ENCODE measurements at regions of chr20 and their contacts with region 1.

Region 1: DNA sequence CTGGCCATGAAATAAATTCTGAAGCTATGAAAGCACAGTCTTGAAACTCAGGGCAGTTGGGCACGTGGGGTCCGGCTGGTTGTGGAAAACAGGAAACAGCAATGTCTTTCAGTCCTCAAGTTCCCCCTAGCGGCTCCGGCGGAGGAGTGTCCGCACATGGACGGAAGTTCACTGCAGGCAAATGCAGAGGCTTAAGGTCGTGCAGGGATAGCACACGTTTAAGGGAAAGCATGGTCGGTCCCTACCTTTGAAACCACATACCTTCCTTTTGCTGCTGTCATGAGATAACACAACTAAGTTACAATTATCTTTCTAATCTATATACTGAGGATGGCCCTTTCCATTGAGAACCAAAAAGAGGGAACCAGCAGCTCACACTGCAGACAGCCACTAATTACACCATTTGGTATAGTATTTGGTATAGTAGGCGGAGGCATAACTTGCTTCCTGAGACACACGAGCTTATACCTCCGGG is 52.6 kb upstream of the NFATC2 start:
- DNase-seq: peak; percentile 89 to 90
- ATAC-seq: peak; percentile 98 to 99
- H3K4me3 ChIP-seq: no peak overlapping the region
- H3K27ac ChIP-seq: peak overlapping the region; percentile 43 to 48; a peak in 3 of 6 replicates
- H3K4me1 ChIP-seq: peaks cover 5% of the 10 kb centered on the region
- CTCF ChIP-seq: peak; percentile 89
- EP300 ChIP-seq: no peak
- POLR2A ChIP-seq: no peak
- RAD21 ChIP-seq: peak; percentile 98 to 99

Region 2: DNA sequence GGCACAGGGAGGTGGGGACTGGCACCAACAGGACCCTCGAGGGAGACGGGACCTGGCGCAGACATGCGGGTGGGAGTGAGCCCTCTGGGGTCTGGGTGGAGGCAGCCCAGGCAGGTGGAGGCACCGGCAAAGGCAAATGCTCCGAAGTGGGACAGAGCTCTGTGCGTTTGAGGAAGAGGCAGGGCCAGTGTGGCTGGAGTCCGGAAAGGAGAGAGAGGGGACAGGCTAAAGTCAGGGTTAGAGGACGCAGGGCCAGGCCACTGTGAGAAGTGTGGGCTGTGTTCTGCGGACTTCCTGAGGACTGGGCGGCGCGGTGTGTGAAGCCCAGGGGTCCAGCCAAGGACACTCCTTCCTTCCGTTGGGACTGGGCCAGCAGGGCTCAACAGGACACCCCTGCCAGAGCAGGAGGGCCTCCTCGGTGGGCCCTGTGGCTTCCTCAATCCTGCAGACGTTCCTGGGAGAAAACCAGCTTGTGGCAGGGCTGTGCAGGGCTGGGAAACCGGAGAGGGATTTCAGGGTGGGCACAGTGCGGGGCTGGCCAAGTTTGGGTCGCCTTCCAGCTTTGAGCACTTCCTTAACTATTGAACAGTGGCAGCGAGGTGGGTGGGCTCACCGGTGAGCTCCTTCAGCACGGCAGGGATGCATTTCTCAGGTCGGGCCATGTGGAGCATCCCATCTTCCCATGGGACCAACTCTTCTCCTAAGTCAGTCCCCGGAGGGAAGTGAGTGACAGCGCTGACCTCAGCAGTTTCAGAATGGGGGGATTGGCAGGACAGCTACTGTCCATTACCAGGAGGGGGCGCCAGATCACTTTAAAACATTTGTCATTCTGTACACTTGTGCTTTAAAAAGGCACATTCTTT is 614.0 kb before region 1 on chr20:
- CTCF ChIA-PET with region 1: interaction called, 54 read pairs
- POLR2A ChIA-PET with region 1: no interaction called
- DNase-seq: peak; percentile 60 to 78
- ATAC-seq: peak; percentile 47 to 73; a peak in 5 of 6 replicates
- H3K4me3 ChIP-seq: no peak overlapping the region
- H3K27ac ChIP-seq: peak overlapping the region; percentile 64 to 83
- H3K4me1 ChIP-seq: peaks cover 41% of the 10 kb centered on the region
- CTCF ChIP-seq: peak; percentile 85
- EP300 ChIP-seq: no peak
- POLR2A ChIP-seq: no peak
- RAD21 ChIP-seq: peak; percentile 72 to 77

Region 3: DNA sequence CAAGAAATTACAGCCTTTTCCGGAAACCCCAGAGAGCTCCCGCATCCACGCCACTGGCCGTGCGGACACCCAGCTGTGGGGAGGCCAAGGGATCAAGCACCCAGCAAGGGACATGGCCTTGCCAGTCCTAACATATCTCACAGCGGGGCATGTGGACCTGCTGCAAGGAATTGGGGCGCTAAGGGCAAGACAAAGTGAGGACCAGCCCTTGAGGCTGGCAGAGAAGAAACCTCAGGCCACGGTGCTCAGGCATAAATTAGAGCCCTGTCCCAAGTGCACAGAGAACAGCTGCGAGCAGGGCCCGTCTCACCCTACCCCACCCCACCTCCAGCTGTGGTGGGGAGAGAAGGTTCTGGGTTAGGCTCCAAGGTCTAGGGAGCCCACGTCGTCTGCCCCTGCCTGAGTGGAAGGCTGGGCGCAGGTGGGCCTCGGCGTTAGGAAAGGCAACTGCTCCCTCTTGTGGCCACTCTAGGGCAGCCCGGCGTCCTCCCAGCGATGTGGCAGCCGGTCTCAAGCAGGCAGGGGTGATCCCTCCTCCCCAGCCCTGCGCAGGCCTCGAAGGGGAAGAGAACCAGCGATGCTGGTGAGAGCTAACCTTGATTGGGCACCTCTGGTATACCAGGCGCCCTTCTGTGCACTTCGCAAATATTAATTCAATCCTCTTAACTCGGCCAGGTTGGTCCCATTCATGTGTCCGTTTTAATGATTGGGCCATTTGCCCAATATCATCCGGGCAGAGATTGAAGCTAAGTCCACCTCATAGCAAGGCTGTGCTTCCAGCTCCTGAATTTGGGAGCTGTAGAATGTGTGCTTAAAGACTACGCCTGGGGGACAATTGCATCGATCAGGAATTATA is 288.4 kb before region 1 on chr20:
- CTCF ChIA-PET with region 1: interaction called, 18 read pairs
- POLR2A ChIA-PET with region 1: no interaction called
- DNase-seq: peak; percentile 66 to 78
- ATAC-seq: peak; percentile 98 to 100
- H3K4me3 ChIP-seq: no peak overlapping the region
- H3K27ac ChIP-seq: peak overlapping the region; percentile 26 to 41; a peak in 4 of 6 replicates
- H3K4me1 ChIP-seq: 0 out of 3 replicates have a peak, but pooled peaks cover 3% of the 10 kb centered on the region
- CTCF ChIP-seq: peak; percentile 94
- EP300 ChIP-seq: no peak
- POLR2A ChIP-seq: no peak
- RAD21 ChIP-seq: peak; percentile 95 to 97

Region 4: DNA sequence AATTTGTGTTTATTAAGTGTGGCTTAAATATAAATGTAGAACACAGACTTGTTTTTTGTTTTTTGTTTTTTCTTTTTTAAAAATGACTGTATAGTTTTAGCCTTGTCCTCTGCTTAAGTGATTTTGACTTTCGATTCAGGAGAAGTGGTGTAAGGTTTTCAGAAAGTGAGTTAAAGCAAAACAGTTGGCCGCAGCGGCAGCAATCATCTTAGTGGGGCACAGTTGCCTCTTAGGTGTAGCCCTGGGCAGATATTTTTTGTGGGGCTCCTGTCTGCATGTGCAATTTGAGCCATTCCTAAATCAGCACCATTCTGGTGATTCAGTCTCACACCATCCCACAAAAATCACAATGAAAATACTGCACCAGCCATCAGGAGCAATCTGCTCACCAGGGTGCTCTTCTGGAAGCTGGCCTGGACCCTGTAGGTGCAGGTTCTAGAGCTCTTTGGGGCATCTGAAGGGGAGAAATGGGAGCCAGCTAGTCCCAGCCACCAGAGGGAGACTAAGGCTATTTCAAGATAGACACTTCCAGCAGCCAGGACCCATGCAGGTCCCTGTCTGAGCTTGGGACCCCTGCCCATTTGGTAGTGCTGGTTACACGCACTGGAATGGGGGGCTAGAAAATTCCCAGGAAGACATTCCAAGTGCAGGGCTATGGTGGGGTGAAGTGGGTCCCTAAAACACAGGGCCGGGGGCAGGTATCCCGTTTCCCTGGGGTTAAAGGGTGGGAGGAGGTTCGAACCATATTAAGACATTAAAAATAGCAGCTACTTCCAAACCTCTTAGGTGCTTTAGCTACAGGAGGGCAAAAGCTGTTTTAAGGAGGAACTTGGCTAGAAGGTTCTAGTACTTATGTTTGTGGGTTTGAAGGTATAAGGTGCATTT is 209.2 kb before region 1 on chr20:
- CTCF ChIA-PET with region 1: interaction called, 61 read pairs
- POLR2A ChIA-PET with region 1: interaction called, 3 read pairs
- DNase-seq: peak; percentile 62 to 69
- ATAC-seq: peak; percentile 74 to 84
- H3K4me3 ChIP-seq: no peak overlapping the region
- H3K27ac ChIP-seq: no peak overlapping the region
- H3K4me1 ChIP-seq: peaks cover 34% of the 10 kb centered on the region
- CTCF ChIP-seq: peak; percentile 60
- EP300 ChIP-seq: no peak
- POLR2A ChIP-seq: no peak
- RAD21 ChIP-seq: peak; percentile 73

Region 5: DNA sequence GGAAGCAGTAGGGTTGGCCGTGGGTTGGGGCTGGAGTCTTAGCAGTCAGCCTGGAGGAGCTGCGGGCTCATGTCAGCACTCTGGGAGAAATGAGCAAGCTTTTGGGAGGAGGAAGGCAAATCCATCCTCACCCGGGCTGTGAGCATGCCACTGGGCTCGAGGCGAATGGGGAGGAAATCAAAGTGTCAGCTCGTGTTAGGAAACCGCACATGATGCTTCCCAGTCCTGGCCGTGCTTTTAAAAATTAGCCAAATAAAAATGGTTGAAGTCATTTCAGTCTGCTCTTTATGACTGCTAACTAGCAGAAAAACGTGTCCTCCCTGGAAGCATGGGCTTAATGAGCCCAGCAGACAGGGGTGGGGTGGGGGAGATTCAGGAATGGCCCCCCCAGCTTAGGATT is 150.6 kb before region 1 on chr20:
- CTCF ChIA-PET with region 1: interaction called, 11 read pairs
- POLR2A ChIA-PET with region 1: no interaction called
- DNase-seq: no peak
- ATAC-seq: no peak
- H3K4me3 ChIP-seq: no peak overlapping the region
- H3K27ac ChIP-seq: peak overlapping the region in 1 of 2 experiments; percentile 84; a peak in 3 of 6 replicates
- H3K4me1 ChIP-seq: peaks cover 37% of the 10 kb centered on the region
- CTCF ChIP-seq: no peak
- EP300 ChIP-seq: no peak
- POLR2A ChIP-seq: no peak
- RAD21 ChIP-seq: no peak

Region 6: DNA sequence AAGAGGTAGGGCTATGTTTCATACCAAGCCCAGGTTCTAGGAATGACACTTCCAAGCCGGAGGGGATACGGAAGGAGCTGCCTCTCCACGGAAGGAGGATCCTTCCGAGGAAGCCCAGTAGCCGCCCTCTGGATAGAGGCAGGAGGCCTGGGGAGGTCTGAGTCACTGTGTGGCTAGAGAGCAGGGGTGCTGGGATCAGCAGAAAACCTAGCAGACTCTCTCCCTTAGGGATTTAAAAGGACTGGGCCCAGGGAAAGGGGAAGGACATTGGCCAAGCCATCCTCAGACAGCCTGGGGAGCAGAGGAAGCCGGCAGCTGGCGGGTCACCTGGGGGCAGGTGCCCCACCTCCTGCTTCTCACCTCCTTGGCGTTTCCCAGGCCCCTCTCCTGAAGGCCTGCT is 16.0 kb before region 1 on chr20:
- CTCF ChIA-PET with region 1: interaction called, 43 read pairs
- POLR2A ChIA-PET with region 1: no interaction called
- DNase-seq: no peak
- ATAC-seq: peak; percentile 54 to 61; a peak in 5 of 6 replicates
- H3K4me3 ChIP-seq: no peak overlapping the region
- H3K27ac ChIP-seq: 0 out of 6 replicates have a peak overlapping the region, but pooled peaks of 1 of the 2 experiments have one; percentile 28
- H3K4me1 ChIP-seq: no peaks in the 10 kb centered on the region
- CTCF ChIP-seq: no peak
- EP300 ChIP-seq: no peak
- POLR2A ChIP-seq: no peak
- RAD21 ChIP-seq: no peak

Region 7: DNA sequence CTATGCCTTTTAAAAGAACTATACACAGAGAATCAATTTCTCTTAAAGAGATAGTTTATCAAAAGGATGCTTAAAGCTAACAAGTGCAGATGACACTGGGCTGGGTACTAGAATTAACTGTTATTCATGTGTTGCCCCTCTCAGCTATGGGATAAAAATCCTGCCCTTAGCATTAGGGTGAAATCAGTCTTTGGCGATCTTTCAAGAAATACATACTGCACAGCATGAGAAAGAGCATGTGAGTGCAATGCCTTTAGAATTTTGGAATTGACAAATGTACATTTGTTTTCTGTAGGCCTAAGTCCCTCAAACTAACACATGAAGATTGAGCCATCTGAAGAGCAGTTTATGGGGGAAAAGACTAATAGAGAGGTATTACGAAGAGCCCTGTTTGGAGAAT is 481.1 kb after region 1 on chr20:
- CTCF ChIA-PET with region 1: no interaction called
- POLR2A ChIA-PET with region 1: no interaction called
- DNase-seq: no peak
- ATAC-seq: no peak
- H3K4me3 ChIP-seq: no peak overlapping the region
- H3K27ac ChIP-seq: no peak overlapping the region
- H3K4me1 ChIP-seq: no peaks in the 10 kb centered on the region
- CTCF ChIP-seq: no peak
- EP300 ChIP-seq: no peak
- POLR2A ChIP-seq: no peak
- RAD21 ChIP-seq: no peak